ENCODE measurements at regions of chr6 and their contacts with region 1.

Region 1: GRCh38 chr6:118893807-118894424 is at the start of gene ASF1A:
- DNase-seq: peak; percentile 99
- H3K4me3 ChIP-seq: peak within 1 kb of the TSS; percentile 81
- H3K27ac ChIP-seq: peak within 1 kb of the TSS; percentile 95
- H3K4me1 ChIP-seq: peaks cover 12% of the 10 kb centered on the region
- H3K27me3 ChIP-seq: no peaks in the 10 kb centered on the region
- CTCF ChIP-seq: peak; percentile 66
- total RNA-seq, gene ASF1A: 69.6 and 75.6 TPM in 2 replicates

Region 2: GRCh38 chr6:118651282-118652050 is 242.4 kb before region 1 on chr6 and contains the start of gene CEP85L:
- CTCF ChIA-PET with region 1: no interaction called
- POLR2A ChIA-PET with region 1: no interaction called
- intact Hi-C with region 1: loop called (anchors 5 kb)
- DNase-seq: peak; percentile 96
- H3K4me3 ChIP-seq: peak within 1 kb of the TSS; percentile 95
- H3K27ac ChIP-seq: peak within 1 kb of the TSS; percentile 93
- H3K4me1 ChIP-seq: peaks cover 10% of the 10 kb centered on the region
- H3K27me3 ChIP-seq: no peaks in the 10 kb centered on the region
- CTCF ChIP-seq: no peak
- total RNA-seq, gene CEP85L: 6.5 and 7.4 TPM in 2 replicates

Measured in A673 (cell line).